H1 (cell line): ENCODE measurements at regions of chr1 and their contacts with region 1.

Region 1: DNA sequence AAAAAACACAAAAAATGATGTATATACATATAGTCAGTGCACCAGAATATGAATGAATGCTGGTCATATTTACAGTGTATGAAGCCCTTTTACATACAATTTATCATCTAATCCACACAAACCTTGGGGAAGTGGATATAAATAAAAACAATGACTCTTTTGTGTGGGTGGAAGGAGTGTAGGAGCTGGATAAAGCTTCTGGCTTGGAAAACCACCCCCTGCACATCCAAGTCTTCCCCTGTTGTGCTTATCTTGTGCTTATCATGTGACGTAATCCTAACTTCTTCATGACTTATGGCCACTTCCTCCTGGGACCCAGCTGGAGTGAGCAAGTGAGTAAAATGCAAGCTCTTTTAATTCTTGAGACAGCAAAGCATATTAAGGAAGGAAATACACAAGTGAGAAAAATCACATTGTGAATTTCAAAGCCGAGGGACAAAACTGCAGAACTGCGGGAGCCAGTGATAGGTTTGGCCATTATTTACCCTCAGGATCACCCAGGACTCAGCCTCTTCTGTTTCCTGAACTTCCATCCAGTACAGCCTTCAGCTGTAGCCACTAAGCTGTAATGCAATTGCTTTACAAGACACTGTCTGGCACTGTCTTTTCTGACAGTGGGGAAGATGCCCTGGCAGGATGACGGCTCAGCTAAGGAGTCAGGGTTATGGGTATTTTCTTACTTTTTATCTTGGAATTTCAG is 104.0 kb upstream of the PPM1J start:
- DNase-seq: no peak
- H3K4me3 ChIP-seq: no peak overlapping the region
- H3K27ac ChIP-seq: peak overlapping the region; percentile 57
- H3K4me1 ChIP-seq: peaks cover 7 to 27% (median 21%) of the 10 kb centered on the region in 4 experiments
- H3K27me3 ChIP-seq: no peaks in the 10 kb centered on the region
- CTCF ChIP-seq: no peak
- EP300 ChIP-seq: no peak
- POLR2A ChIP-seq: no peak
- RAD21 ChIP-seq: no peak

Region 2: GRCh38 chr1:112762541-112763517 is 56.3 kb before region 1 on chr1:
- CTCF ChIA-PET with region 1: no interaction called
- POLR2A ChIA-PET with region 1: no interaction called
- DNase-seq: no peak
- H3K4me3 ChIP-seq: no peak overlapping the region
- H3K27ac ChIP-seq: no peak overlapping the region
- H3K4me1 ChIP-seq: peaks cover 0 to 4% (median 0%) of the 10 kb centered on the region in 4 experiments; a peak in 4 of 7 replicates
- H3K27me3 ChIP-seq: no peaks in the 10 kb centered on the region; a peak in 2 of 7 replicates
- CTCF ChIP-seq: no peak
- EP300 ChIP-seq: no peak
- POLR2A ChIP-seq: no peak
- RAD21 ChIP-seq: no peak

Region 3: GRCh38 chr1:112849425-112850033 is 30.4 kb after region 1 on chr1:
- CTCF ChIA-PET with region 1: interaction called, 3 read pairs
- POLR2A ChIA-PET with region 1: interaction called, 41 read pairs
- DNase-seq: peak in 1 of 2 experiments; percentile 81
- H3K4me3 ChIP-seq: peak overlapping the region; percentile 14 to 51 (median 20); a peak in 7 of 8 replicates
- H3K27ac ChIP-seq: no peak overlapping the region
- H3K4me1 ChIP-seq: peaks cover 0 to 20% (median 6%) of the 10 kb centered on the region in 4 experiments; a peak in 6 of 7 replicates
- H3K27me3 ChIP-seq: peaks cover 0 to 2% (median 0%) of the 10 kb centered on the region in 4 experiments; a peak in 1 of 7 replicates
- CTCF ChIP-seq: no peak
- EP300 ChIP-seq: no peak
- POLR2A ChIP-seq: no peak; a peak in 1 of 3 replicates
- RAD21 ChIP-seq: no peak

Region 4: GRCh38 chr1:112904071-112904830 is 85.1 kb after region 1 on chr1:
- CTCF ChIA-PET with region 1: no interaction called
- POLR2A ChIA-PET with region 1: interaction called, 16 read pairs
- DNase-seq: peak in 1 of 2 experiments; percentile 44
- H3K4me3 ChIP-seq: no peak overlapping the region
- H3K27ac ChIP-seq: no peak overlapping the region
- H3K4me1 ChIP-seq: peaks cover 2 to 19% (median 8%) of the 10 kb centered on the region in 4 experiments; a peak in 4 of 7 replicates
- H3K27me3 ChIP-seq: no peaks in the 10 kb centered on the region
- CTCF ChIP-seq: no peak
- EP300 ChIP-seq: no peak
- POLR2A ChIP-seq: no peak
- RAD21 ChIP-seq: no peak

Region 5: DNA sequence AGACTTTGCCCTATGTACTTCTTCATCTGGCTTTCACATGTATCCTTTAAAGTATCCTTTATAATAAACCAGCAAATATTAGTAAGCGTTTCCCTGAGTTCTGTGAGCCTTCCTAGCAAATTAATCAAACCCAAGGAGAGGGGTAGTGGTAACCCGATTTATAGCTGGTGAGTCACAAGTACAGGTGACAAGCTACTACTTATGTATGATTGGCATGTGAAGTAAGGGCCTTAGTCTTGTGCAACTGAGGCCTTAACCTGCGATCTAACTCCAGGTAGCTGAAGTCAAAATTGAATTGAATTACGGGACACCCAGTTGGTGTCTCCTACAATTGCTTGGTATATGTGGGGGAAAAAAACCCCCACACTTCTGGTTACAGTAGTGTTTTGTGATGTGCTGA is 110.8 kb after region 1 on chr1:
- CTCF ChIA-PET with region 1: no interaction called
- POLR2A ChIA-PET with region 1: no interaction called
- DNase-seq: no peak
- H3K4me3 ChIP-seq: no peak overlapping the region
- H3K27ac ChIP-seq: no peak overlapping the region
- H3K4me1 ChIP-seq: peaks cover 0 to 3% (median 0%) of the 10 kb centered on the region in 4 experiments; a peak in 1 of 7 replicates
- H3K27me3 ChIP-seq: no peaks in the 10 kb centered on the region
- CTCF ChIP-seq: no peak
- EP300 ChIP-seq: no peak
- POLR2A ChIP-seq: no peak
- RAD21 ChIP-seq: no peak